Activated T-helper 2 cell treated with anti-CD3 and anti-CD28 coated beads, Interferon-gamma antibody, Interleukin-2, Interleukin-4, amounts not matched to agents 10 μg/mL and 5 μg/mL and 100 μg/mL, durations not matched to agents 14 hours and 24 hours and 36 hours (primary cell): ENCODE measurements at regions of chr2 and their contacts with region 1.

Region 1: GRCh38 chr2:112054847-112055729 is at the start of gene TMEM87B:
- DNase-seq: peak; percentile 97
- H3K4me3 Mint-ChIP-seq: peak within 1 kb of the TSS; percentile 98
- H3K27ac Mint-ChIP-seq: peak within 1 kb of the TSS; percentile 97
- H3K4me1 Mint-ChIP-seq: peaks cover 32% of the 10 kb centered on the region
- H3K27me3 Mint-ChIP-seq: peaks cover 3% of the 10 kb centered on the region
- total RNA-seq, gene TMEM87B: 15.8 and 16.5 TPM in 2 replicates

Region 2: GRCh38 chr2:112187805-112188596 is 132.9 kb after region 1 on chr2:
- intact Hi-C with region 1: loop called (anchors 10 kb)
- DNase-seq: peak; percentile 73
- H3K4me3 Mint-ChIP-seq: peak overlapping the region; percentile 31
- H3K27ac Mint-ChIP-seq: peak overlapping the region; percentile 98
- H3K4me1 Mint-ChIP-seq: peaks cover 70% of the 10 kb centered on the region
- H3K27me3 Mint-ChIP-seq: no peaks in the 10 kb centered on the region

Region 3: GRCh38 chr2:112242384-112242783 is 187.3 kb after region 1 on chr2:
- intact Hi-C with region 1: no loop called
- DNase-seq: no peak
- H3K4me3 Mint-ChIP-seq: no peak overlapping the region
- H3K27ac Mint-ChIP-seq: no peak overlapping the region
- H3K4me1 Mint-ChIP-seq: peaks cover 27% of the 10 kb centered on the region
- H3K27me3 Mint-ChIP-seq: no peaks in the 10 kb centered on the region

Region 4: GRCh38 chr2:112433932-112434730 is 379.0 kb after region 1 on chr2:
- intact Hi-C with region 1: loop called (anchors 5 kb)
- DNase-seq: no peak
- H3K4me3 Mint-ChIP-seq: no peak overlapping the region
- H3K27ac Mint-ChIP-seq: no peak overlapping the region
- H3K4me1 Mint-ChIP-seq: peaks cover 7% of the 10 kb centered on the region
- H3K27me3 Mint-ChIP-seq: peaks cover 7% of the 10 kb centered on the region